Dorsolateral prefrontal cortex (tissue), 120 donors: ENCODE measurements at regions of chr3 and their contacts with region 1.

Region 1: GRCh38 chr3:4670352-4670751 is 177.2 kb downstream of the ITPR1 start:
- DNase-seq: no peak
- H3K4me3 ChIP-seq: no peak overlapping the region
- H3K27ac ChIP-seq: no peak overlapping the region
- H3K27me3 ChIP-seq: no peaks in the 10 kb centered on the region
- CTCF ChIP-seq: peak in 12 of 56 donors; percentile 9 to 40 (median 17)

Region 2: GRCh38 chr3:4615750-4616149 is 54.6 kb before region 1 on chr3:
- intact Hi-C with region 1: no loop called
- DNase-seq: no peak
- H3K4me3 ChIP-seq: no peak overlapping the region
- H3K27ac ChIP-seq: no peak overlapping the region
- H3K27me3 ChIP-seq: no peaks in the 10 kb centered on the region
- CTCF ChIP-seq: no peak

Region 3: GRCh38 chr3:4845882-4846281 is 175.5 kb after region 1 on chr3:
- intact Hi-C with region 1: no loop called
- DNase-seq: no peak
- H3K4me3 ChIP-seq: no peak overlapping the region
- H3K27ac ChIP-seq: no peak overlapping the region
- H3K27me3 ChIP-seq: no peaks in the 10 kb centered on the region
- CTCF ChIP-seq: no peak

Region 4: GRCh38 chr3:6229778-6230410 is 1559.5 kb after region 1 on chr3:
- intact Hi-C with region 1: loop called in 1 of 2 experiments (anchors 10 kb)
- DNase-seq: no peak
- H3K4me3 ChIP-seq: no peak overlapping the region
- H3K27ac ChIP-seq: no peak overlapping the region
- H3K27me3 ChIP-seq: no peaks in the 10 kb centered on the region
- CTCF ChIP-seq: no peak